ENCODE measurements at regions of chr15 and their contacts with region 1.

Region 1: DNA sequence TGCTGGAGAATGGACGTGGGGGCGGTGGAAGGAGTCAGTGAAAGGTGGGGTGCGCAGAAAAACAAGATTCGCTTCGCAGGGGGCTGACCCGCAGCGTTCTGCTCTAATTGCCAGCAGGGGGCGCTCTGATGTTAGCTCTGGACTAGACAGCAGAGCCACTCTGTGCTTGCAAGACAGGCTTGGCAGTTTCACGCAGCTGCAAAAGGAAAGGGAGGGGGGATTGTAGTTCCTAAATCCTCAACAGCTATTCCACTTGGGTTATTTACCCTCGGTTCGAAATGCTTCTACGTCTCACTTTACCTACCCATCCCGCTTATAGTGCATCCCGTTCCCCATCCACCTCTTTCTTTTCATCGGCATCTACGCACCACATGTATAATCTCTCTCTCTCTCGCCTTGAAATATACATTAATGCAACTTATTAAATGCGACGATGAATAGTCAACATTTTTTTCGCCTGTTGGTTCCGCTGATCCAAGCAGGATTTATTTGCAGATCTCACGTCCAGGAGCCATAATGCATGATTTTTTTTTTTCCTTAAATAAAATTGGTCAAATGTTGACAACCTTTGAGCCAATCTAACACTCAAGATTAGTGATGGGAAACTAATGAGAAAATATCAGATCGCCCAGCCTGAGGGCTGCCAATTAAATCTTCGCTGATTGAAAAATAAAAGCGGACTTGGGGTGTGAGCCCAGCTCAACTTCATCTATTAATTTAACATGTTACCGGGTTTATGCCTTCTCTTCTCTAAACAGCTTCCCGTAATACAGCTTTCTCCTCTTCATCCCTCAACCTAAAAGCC is 216.4 kb downstream of the MEIS2 start:
- DNase-seq: peak; percentile 70
- H3K4me3 Mint-ChIP-seq: no peak overlapping the region
- H3K27ac Mint-ChIP-seq: no peak overlapping the region
- H3K4me1 Mint-ChIP-seq: peaks cover 1% of the 10 kb centered on the region
- H3K27me3 Mint-ChIP-seq: peaks cover 91% of the 10 kb centered on the region

Region 2: GRCh38 chr15:37109168-37109871 is 225.4 kb after region 1 on chr15:
- CTCF ChIA-PET with region 1: interaction called, 12 read pairs
- POLR2A ChIA-PET with region 1: no interaction called
- DNase-seq: no peak
- H3K4me3 Mint-ChIP-seq: no peak overlapping the region
- H3K27ac Mint-ChIP-seq: no peak overlapping the region
- H3K4me1 Mint-ChIP-seq: peaks cover 4% of the 10 kb centered on the region
- H3K27me3 Mint-ChIP-seq: peaks cover 79% of the 10 kb centered on the region